ENCODE measurements at regions of chr2 and their contacts with region 1.

Region 1: DNA sequence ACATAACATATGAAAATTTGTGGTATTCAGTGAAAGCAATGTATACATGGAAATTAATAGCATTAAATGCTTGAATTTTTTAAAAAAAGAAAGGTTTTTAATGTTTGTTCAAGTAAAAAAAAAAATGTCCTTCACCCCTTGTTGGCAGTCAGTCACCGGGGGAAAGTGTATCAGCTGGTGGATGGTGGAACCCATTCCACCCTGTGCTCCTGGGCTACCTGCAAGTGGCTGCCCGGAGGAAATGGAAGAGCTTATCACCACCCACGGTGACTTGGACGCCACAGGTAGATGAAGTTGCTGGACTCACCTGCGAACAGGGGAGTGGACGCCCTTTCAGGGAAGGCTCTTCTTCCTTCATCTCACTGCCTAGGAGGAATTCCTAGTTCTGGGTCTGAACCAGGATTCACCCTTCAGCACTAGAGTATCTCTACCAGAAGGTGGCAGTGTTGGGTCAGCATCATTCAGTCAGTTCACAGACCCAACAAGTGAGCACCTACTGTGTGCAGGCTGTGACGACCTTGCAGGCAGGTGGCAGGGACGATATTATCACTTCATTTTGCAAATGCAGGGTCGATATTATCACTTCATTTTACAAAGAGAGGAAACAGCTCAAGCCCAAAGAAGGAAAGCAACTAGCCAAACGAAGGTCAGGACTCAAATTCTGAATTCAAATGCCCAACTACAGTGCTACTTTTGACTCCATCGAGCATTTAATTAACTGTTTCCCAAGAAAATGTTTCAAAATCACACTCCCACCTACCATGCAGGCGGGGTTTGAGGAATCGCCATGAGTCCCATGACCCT is 35.8 kb downstream of the CIB4 start:
- DNase-seq: peak in 4 of 5 donors; percentile 57 to 78 (median 68)
- H3K4me3 ChIP-seq: no peak overlapping the region
- H3K27ac ChIP-seq: no peak overlapping the region
- H3K4me1 ChIP-seq: peaks cover 0 to 7% (median 0%) of the 10 kb centered on the region in 3 donors
- H3K27me3 ChIP-seq: no peaks in the 10 kb centered on the region
- CTCF ChIP-seq: peak; percentile 87

Region 2: GRCh38 chr2:26550276-26550950 is 55.0 kb before region 1 on chr2:
- intact Hi-C with region 1: no loop called
- DNase-seq: peak in 1 of 5 donors; percentile 25
- H3K4me3 ChIP-seq: no peak overlapping the region
- H3K27ac ChIP-seq: no peak overlapping the region
- H3K4me1 ChIP-seq: no peaks in the 10 kb centered on the region
- H3K27me3 ChIP-seq: no peaks in the 10 kb centered on the region
- CTCF ChIP-seq: no peak

Region 3: GRCh38 chr2:26740890-26741302 is 135.5 kb after region 1 on chr2:
- intact Hi-C with region 1: loop called (anchors 5 kb)
- DNase-seq: peak in 2 of 5 donors; percentile 30 to 47
- H3K4me3 ChIP-seq: no peak overlapping the region
- H3K27ac ChIP-seq: no peak overlapping the region
- H3K4me1 ChIP-seq: peaks cover 0 to 3% (median 0%) of the 10 kb centered on the region in 3 donors
- H3K27me3 ChIP-seq: no peaks in the 10 kb centered on the region
- CTCF ChIP-seq: no peak